ENCODE measurements at regions of chr1 and their contacts with region 1.

Region 1: DNA sequence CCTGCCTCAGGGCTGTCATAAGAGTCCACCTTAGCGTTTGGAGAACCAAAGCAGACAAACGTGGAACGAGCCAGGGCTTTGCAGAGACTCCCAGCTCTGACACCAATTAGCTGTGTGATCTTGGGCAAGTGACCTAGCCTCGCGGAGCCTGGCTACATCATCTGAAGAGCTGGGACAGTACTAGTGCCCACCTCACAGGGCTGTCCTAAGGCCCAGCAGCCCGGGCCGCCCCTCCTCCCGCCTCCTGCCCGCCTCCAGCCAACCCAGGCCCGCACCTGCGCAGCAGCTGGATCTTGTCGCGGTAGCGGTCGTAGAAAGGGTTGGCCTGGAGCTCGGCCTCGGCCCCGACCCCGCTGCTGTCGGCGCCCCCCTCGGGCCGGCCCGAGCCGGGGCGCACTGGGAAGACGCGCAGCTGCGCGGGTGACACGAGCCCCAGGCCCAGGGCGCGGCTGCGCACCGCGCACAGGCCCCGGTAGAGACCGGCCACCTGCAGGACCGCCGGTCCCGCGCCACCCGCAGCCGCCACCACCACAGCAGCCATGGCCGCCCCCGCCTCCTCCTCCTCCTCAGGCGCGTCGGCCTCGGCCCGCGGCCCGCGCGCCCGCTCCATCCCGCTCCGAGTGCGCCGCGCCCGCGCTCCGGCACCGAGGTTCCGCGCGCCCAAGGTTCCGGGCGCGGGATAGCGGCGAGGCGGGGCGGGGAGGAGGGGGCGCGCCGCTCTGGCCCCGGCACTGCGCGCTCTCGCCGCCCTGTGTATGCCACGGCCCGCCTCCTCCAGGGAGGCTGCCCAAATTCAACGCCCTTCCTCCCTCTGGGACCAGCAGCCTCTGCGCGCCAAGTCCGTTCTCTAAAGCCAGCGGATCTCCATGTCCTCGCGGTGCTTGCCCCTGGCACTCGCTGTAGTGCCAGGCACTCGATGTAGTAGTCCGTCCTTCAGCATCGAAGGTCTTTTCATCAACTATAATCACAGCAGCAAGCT is at the start of gene ATPAF1:
- DNase-seq: peak in 1 of 2 experiments; percentile 60
- H3K4me3 ChIP-seq: peak within 1 kb of the TSS; percentile 69
- H3K27ac ChIP-seq: no peak within 1 kb of the TSS
- H3K4me1 ChIP-seq: peaks cover 10% of the 10 kb centered on the region; the same call in 1 of the 2 replicates
- H3K27me3 ChIP-seq: no peaks in the 10 kb centered on the region
- CTCF ChIP-seq: no peak
- total RNA-seq, gene ATPAF1: 47.0 and 50.3 TPM in 2 replicates

Region 2: DNA sequence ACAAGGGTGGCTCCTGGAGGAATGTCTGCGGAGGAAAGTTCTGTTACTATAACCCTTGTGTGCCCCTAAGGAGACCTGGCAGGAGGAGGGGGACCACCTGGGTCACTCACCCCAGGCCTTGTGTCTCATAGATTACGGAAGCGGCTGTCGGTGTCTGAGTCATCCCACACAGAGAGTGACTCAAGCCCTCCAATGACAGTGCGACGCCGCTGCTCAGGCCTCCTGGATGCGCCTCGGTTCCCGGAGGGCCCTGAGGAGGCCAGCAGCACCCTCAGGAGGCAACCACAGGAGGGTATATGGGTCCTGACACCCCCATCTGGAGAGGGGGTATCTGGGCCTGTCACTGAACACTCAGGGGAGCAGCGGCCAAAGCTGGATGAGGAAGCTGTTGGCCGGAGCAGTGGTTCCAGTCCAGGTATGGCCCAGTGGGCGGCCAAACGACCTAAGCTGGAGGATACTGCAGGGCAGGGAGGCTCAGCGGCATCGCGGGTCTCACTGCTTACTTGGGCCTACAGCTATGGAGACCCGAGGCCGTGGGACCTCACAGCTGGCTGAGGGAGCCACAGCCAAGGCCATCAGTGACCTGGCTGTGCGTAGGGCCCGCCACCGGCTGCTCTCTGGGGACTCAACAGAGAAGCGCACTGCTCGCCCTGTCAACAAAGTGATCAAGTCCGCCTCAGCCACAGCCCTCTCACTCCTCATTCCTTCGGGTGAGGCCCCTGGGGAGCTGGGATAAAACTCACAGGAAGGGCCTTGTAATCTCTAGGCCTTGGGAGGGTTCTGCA is 637.0 kb before region 1 on chr1:
- CTCF ChIA-PET with region 1: no interaction called
- POLR2A ChIA-PET with region 1: no interaction called
- intact Hi-C with region 1: no loop called
- DNase-seq: no peak
- H3K4me3 ChIP-seq: no peak overlapping the region
- H3K27ac ChIP-seq: no peak overlapping the region
- H3K4me1 ChIP-seq: no peaks in the 10 kb centered on the region
- H3K27me3 ChIP-seq: no peaks in the 10 kb centered on the region
- CTCF ChIP-seq: no peak

Region 3: DNA sequence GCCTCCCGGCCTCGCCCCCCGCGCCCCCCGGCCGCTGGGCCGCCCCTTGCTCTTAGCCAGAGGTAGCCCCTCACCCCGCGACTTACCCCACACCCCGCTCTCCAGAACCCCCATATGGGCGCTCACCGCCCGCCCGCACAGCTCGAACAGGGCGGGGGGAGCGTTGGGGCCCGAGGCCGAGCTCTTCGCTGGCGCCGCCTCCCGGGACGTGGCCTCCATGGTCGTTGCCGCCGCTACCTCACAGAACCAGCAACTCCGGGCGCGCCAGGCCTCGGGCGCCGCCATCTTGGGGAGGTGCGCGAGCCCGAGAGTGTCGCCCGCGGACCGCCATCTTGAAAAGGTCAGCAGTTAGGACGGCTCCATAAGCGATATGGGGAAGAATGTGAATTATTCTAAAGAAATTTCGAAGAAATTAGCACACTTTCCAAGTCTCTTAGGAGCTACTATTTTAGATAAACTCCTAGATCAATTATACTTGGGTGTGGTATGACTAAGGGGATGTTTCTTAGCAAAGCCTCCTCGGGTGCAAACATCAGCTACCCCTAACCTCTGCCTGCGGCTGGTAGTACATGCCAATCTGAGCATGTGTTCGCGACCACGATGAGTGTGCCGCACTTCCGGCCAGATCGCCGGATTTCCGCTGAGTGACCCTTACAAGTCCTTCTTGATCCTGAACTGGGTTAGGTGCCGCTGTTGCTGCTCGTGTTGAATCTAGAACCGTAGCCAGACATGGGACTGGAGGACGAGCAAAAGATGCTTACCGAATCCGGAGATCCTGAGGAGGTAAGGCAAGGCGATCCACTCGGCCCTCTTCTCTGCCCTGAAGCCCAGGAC is 364.8 kb before region 1 on chr1 and contains the starts of genes LRRC41 and UQCRH:
- CTCF ChIA-PET with region 1: no interaction called
- POLR2A ChIA-PET with region 1: interaction called, 10 read pairs
- intact Hi-C with region 1: no loop called
- DNase-seq: peak; percentile 94 to 95
- H3K4me3 ChIP-seq: peak within 1 kb of the TSS; percentile 95
- H3K27ac ChIP-seq: peak within 1 kb of the TSS; percentile 87
- H3K4me1 ChIP-seq: peaks cover 35% of the 10 kb centered on the region
- H3K27me3 ChIP-seq: no peaks in the 10 kb centered on the region
- CTCF ChIP-seq: 0 out of 2 replicates have a peak, but pooled peaks have one; percentile 12
- total RNA-seq, gene LRRC41: 65.9 and 66.3 TPM in 2 replicates
- total RNA-seq, gene UQCRH: 457 and 551 TPM in 2 replicates

Region 4: GRCh38 chr1:46643368-46643775 is 24.7 kb before region 1 on chr1:
- CTCF ChIA-PET with region 1: interaction called, 14 read pairs
- POLR2A ChIA-PET with region 1: no interaction called
- intact Hi-C with region 1: no loop called
- DNase-seq: peak; percentile 55 to 95
- H3K4me3 ChIP-seq: no peak overlapping the region
- H3K27ac ChIP-seq: peak overlapping the region; percentile 62
- H3K4me1 ChIP-seq: peaks cover 23% of the 10 kb centered on the region
- H3K27me3 ChIP-seq: no peaks in the 10 kb centered on the region
- CTCF ChIP-seq: no peak

Region 5: DNA sequence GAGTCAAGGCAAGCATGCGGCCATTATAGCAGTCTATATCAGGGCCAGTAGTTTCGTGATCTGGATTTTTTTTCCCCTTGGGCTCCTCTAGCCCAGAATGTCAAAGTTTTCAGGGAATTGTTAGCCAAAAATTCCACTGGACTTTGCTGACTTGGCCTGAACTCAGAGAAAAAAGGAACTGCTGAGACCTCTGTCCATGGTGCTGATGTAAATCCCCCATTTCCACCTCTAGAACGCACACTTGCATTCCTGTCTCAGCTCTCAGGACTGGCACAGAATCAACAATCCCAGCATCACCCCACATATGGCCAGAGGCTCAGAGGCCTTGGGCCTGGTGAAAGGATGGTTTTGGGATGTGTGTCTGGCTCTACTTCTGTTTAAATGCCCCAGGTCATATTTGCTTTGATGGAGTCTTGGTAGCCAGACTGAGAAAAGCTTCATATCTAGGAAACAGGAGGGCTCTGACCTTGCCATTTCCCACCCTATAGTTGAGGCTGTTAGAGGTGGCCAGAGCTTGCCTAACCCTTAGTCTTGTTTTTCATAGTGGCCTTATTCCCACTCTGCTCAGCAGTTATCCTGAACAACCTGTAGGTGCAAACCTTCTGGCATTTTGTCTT is 67.7 kb after region 1 on chr1:
- CTCF ChIA-PET with region 1: no interaction called
- POLR2A ChIA-PET with region 1: no interaction called
- intact Hi-C with region 1: no loop called
- DNase-seq: peak; percentile 44 to 50
- H3K4me3 ChIP-seq: no peak overlapping the region
- H3K27ac ChIP-seq: no peak overlapping the region
- H3K4me1 ChIP-seq: no peaks in the 10 kb centered on the region
- H3K27me3 ChIP-seq: peaks cover 8% of the 10 kb centered on the region; the same call in 1 of the 2 replicates
- CTCF ChIP-seq: peak; percentile 57

Region 6: DNA sequence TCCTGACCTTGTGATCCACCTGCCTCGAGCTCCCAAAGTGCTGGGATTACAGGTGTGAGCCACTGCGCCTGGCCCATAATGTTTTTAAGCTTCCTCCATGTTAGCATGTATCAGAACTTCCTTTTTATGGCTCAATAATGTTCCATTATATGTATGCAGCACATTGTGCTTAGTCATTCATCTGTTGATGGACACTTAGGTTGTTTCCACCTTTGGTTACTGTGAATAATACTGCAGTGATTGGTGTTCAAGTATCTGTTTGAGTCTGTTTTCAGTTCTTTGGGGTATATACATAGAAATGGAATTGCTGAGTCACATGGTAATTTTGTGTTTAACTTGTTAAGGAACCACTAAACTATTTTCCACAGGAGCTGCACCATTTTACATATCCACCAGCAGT is 683.2 kb after region 1 on chr1:
- CTCF ChIA-PET with region 1: no interaction called
- POLR2A ChIA-PET with region 1: no interaction called
- intact Hi-C with region 1: no loop called
- DNase-seq: no peak
- H3K4me3 ChIP-seq: no peak overlapping the region
- H3K27ac ChIP-seq: peak overlapping the region; percentile 52
- H3K4me1 ChIP-seq: 0 out of 2 replicates have a peak, but pooled peaks cover 4% of the 10 kb centered on the region
- H3K27me3 ChIP-seq: no peaks in the 10 kb centered on the region
- CTCF ChIP-seq: no peak

Measured in PC-9 (cell line).